Psoas muscle (tissue), 8 donors: ENCODE measurements at regions of chr1 and their contacts with region 1.

Region 1: DNA sequence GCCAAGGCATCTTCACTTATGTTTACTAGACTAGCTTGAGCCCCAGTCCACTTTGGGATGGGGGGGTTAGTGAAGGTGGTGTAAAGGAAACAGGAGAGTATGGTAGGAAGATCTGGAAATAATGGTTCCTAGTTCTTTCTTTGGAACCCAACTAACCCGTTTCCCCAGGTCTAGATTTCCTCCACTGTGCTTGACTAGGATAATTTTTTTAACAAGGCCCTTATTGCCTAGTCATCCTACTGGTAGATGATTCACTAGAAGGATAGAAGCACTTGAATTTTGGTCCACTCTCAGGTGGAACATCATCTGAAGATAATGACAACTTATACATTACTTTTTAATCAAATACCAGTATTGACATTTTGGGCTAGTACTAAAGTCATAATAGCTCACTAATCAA is 45.9 kb upstream of the MYOCOS start:
- DNase-seq: no peak
- ATAC-seq: no peak
- H3K4me3 ChIP-seq: no peak overlapping the region
- H3K27ac ChIP-seq: no peak overlapping the region
- H3K4me1 ChIP-seq: no peaks in the 10 kb centered on the region
- H3K27me3 ChIP-seq: no peaks in the 10 kb centered on the region
- CTCF ChIP-seq: no peak

Region 2: GRCh38 chr1:171545523-171545922 is 30.6 kb before region 1 on chr1:
- intact Hi-C with region 1: loop called in 1 of 2 experiments (anchors 5 kb)
- DNase-seq: no peak
- ATAC-seq: no peak
- H3K4me3 ChIP-seq: no peak overlapping the region
- H3K27ac ChIP-seq: no peak overlapping the region
- H3K4me1 ChIP-seq: no peaks in the 10 kb centered on the region
- H3K27me3 ChIP-seq: no peaks in the 10 kb centered on the region
- CTCF ChIP-seq: no peak

Region 3: GRCh38 chr1:171623651-171624331 is 47.6 kb after region 1 on chr1:
- intact Hi-C with region 1: no loop called
- DNase-seq: no peak
- ATAC-seq: no peak
- H3K4me3 ChIP-seq: no peak overlapping the region
- H3K27ac ChIP-seq: no peak overlapping the region
- H3K4me1 ChIP-seq: no peaks in the 10 kb centered on the region
- H3K27me3 ChIP-seq: peaks cover 0 to 2% (median 0%) of the 10 kb centered on the region in 3 donors
- CTCF ChIP-seq: no peak

Region 4: GRCh38 chr1:171707583-171707982 is 131.4 kb after region 1 on chr1:
- intact Hi-C with region 1: no loop called
- DNase-seq: no peak
- ATAC-seq: no peak
- H3K4me3 ChIP-seq: no peak overlapping the region
- H3K27ac ChIP-seq: no peak overlapping the region
- H3K4me1 ChIP-seq: no peaks in the 10 kb centered on the region
- H3K27me3 ChIP-seq: no peaks in the 10 kb centered on the region
- CTCF ChIP-seq: no peak